ENCODE measurements at regions of chr21 and their contacts with region 1.

Region 1: GRCh38 chr21:37916310-37917051 is at the start of gene KCNJ6:
- DNase-seq: no peak
- H3K4me3 Mint-ChIP-seq: no peak within 1 kb of the TSS
- H3K27ac Mint-ChIP-seq: no peak within 1 kb of the TSS
- H3K4me1 Mint-ChIP-seq: peaks cover 1% of the 10 kb centered on the region
- H3K27me3 Mint-ChIP-seq: peaks cover 55% of the 10 kb centered on the region
- total RNA-seq, gene KCNJ6: not detected in 2 replicates

Region 2: GRCh38 chr21:36698981-36699891 is 1217.2 kb before region 1 on chr21 and contains the start of gene SIM2:
- intact Hi-C with region 1: loop called (anchors 10 kb)
- DNase-seq: no peak
- H3K4me3 Mint-ChIP-seq: no peak within 1 kb of the TSS
- H3K27ac Mint-ChIP-seq: no peak within 1 kb of the TSS
- H3K4me1 Mint-ChIP-seq: peaks cover 6% of the 10 kb centered on the region
- H3K27me3 Mint-ChIP-seq: peaks cover 72% of the 10 kb centered on the region
- total RNA-seq, gene SIM2: 0.18 and 0.21 TPM in 2 replicates

Region 3: GRCh38 chr21:37711836-37712568 is 204.5 kb before region 1 on chr21:
- intact Hi-C with region 1: loop called (anchors 10 kb)
- DNase-seq: peak; percentile 21
- H3K4me3 Mint-ChIP-seq: no peak overlapping the region
- H3K27ac Mint-ChIP-seq: no peak overlapping the region
- H3K4me1 Mint-ChIP-seq: no peaks in the 10 kb centered on the region
- H3K27me3 Mint-ChIP-seq: peaks cover 10% of the 10 kb centered on the region

Region 4: DNA sequence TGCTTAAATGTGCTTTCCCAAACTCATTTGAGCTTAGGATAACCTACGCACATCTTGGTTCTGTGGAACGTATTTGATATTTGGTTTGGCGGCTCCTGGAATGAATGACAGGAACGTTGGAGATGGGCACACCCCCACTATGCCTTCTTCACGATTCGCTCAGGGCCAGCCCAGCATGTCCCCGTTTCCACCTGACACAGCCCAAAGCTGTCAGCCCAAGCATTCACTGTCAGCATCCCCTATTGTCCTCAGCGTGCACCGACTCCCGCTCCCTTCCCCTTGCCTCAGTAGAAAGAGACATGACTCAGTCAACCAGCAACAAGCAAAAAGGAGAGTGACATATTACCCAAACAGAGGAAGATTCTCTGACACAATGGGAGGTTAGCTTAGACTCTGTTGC is 181.6 kb before region 1 on chr21:
- intact Hi-C with region 1: no loop called
- DNase-seq: no peak
- H3K4me3 Mint-ChIP-seq: no peak overlapping the region
- H3K27ac Mint-ChIP-seq: no peak overlapping the region
- H3K4me1 Mint-ChIP-seq: no peaks in the 10 kb centered on the region
- H3K27me3 Mint-ChIP-seq: peaks cover 5% of the 10 kb centered on the region

Region 5: DNA sequence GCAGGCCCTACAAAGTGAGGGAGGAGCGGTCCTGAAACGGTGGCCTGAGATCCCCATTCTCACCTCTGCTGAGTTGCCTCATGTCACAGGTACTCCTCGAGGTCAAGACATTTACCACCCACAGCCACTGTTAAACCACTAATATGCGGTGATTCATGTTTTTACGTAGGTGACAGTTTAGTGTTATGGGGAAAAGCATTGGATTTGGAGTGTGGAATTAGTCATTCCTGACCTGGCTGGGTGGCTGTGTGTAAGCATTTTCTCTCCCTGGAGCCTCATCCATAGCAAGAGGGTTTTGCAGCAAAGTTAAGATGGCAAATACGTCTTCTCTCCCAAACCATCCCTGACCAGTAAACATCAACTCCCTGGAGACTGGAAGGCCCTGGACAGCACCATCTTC is 57.6 kb after region 1 on chr21:
- intact Hi-C with region 1: no loop called
- DNase-seq: no peak
- H3K4me3 Mint-ChIP-seq: no peak overlapping the region
- H3K27ac Mint-ChIP-seq: no peak overlapping the region
- H3K4me1 Mint-ChIP-seq: no peaks in the 10 kb centered on the region
- H3K27me3 Mint-ChIP-seq: no peaks in the 10 kb centered on the region

Measured in activated T-helper 2 cell treated with anti-CD3 and anti-CD28 coated beads, Interferon-gamma antibody, Interleukin-2, Interleukin-4, amounts not matched to agents 10 μg/mL and 5 μg/mL and 100 μg/mL, durations not matched to agents 14 hours and 24 hours and 36 hours (primary cell).